Activated naive CD4-positive, alpha-beta T cell treated with anti-CD3 and anti-CD28 coated beads for 36 hours (primary cell): ENCODE measurements at regions of chr1 and their contacts with region 1.

Region 1: DNA sequence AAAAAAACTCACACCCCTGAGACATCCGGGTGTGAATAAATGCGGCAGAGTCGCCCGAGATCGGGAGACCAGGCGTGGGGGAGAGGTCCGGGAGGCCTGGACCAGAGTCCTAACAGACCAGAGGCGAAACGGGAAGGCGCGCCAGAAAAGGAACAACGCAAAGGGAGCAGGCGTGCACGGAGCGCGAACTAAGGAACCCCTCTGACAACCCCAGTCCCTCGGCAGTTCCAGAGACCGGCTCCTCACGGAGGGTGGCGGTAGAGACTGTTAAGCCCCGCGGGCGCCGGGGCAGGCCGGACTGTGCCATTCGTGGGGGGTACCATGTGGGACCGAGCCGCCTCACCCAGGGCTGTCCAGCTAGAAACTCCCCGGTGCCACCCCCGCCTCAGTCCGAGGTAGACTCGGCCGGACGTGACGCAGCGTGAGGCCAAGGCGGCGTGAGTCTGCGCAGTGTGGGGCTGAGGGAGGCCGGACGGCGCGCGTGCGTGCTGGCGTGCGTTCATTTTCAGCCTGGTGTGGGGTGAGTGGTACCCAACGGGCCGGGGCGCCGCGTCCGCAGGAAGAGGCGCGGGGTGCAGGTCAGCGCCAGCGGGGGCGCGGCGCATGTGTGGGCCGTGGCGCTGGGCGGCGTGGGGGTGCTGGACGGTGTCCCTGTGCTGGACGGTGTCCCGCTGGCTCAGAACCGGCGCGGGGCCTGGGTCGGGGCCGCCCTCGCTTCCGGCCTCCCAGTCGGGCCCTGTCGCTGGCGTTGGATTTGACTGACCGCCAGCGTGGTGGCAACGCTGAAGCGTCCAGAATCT is at the start of gene PARK7:
- DNase-seq: peak; percentile 100
- H3K4me3 Mint-ChIP-seq: peak within 1 kb of the TSS; percentile 99
- H3K27ac Mint-ChIP-seq: peak within 1 kb of the TSS; percentile 98
- H3K4me1 Mint-ChIP-seq: peaks cover 53% of the 10 kb centered on the region
- H3K27me3 Mint-ChIP-seq: no peaks in the 10 kb centered on the region
- total RNA-seq, gene PARK7: 373 to 397 TPM

Region 2: DNA sequence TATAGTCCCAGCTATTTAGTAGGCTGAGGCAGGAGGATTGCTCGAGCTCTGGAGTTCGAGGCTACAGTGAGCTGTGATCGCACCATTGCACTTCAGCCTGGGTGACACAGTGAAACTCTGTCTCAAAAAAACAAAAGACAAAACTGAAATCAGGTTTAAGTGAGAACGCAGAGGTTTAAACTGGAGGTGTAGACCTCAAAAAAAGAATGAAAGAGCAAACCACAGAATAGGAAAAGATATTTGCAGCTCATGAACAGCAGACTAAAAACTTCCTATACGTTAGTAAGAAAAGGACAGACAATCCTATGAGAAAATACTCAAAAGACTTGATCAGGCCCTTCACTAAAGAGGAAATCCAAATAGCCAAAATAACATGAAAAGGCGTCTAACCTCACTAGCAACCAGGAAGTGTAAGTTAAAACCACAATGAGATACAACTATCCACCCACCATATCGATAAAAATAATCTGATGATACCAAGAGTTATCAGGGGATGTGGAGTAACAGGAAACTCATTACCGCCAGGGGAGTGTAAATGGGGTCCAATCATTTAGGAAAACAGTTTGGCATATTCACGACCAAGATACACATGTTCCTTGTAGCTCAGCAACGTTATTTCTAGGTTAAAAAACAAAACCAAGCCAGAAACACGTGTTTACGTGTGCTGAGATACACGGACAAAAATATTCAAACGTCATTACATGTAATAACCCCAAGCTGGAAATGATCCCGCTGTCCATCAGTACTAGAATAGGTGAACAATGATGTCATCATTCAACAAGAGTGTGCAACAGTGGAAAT is 30.6 kb before region 1 on chr1:
- CTCF ChIA-PET with region 1: no interaction called
- intact Hi-C with region 1: no loop called
- DNase-seq: peak; percentile 37
- H3K4me3 Mint-ChIP-seq: peak overlapping the region; percentile 3
- H3K27ac Mint-ChIP-seq: peak overlapping the region; percentile 48
- H3K4me1 Mint-ChIP-seq: peaks cover 21% of the 10 kb centered on the region
- H3K27me3 Mint-ChIP-seq: peaks cover 2% of the 10 kb centered on the region

Region 3: GRCh38 chr1:7942214-7942921 is 19.0 kb before region 1 on chr1:
- CTCF ChIA-PET with region 1: no interaction called
- intact Hi-C with region 1: no loop called
- DNase-seq: peak; percentile 60
- H3K4me3 Mint-ChIP-seq: peak overlapping the region; percentile 66
- H3K27ac Mint-ChIP-seq: peak overlapping the region; percentile 46
- H3K4me1 Mint-ChIP-seq: peaks cover 46% of the 10 kb centered on the region
- H3K27me3 Mint-ChIP-seq: peaks cover 13% of the 10 kb centered on the region

Region 4: GRCh38 chr1:7975212-7975865 is 13.9 kb after region 1 on chr1:
- CTCF ChIA-PET with region 1: interaction called, 10 read pairs
- intact Hi-C with region 1: no loop called
- DNase-seq: peak; percentile 56
- H3K4me3 Mint-ChIP-seq: no peak overlapping the region
- H3K27ac Mint-ChIP-seq: peak overlapping the region; percentile 28
- H3K4me1 Mint-ChIP-seq: peaks cover 2% of the 10 kb centered on the region
- H3K27me3 Mint-ChIP-seq: no peaks in the 10 kb centered on the region